Panc1 (cell line): ENCODE measurements at regions of chr1 and their contacts with region 1.

Region 1: DNA sequence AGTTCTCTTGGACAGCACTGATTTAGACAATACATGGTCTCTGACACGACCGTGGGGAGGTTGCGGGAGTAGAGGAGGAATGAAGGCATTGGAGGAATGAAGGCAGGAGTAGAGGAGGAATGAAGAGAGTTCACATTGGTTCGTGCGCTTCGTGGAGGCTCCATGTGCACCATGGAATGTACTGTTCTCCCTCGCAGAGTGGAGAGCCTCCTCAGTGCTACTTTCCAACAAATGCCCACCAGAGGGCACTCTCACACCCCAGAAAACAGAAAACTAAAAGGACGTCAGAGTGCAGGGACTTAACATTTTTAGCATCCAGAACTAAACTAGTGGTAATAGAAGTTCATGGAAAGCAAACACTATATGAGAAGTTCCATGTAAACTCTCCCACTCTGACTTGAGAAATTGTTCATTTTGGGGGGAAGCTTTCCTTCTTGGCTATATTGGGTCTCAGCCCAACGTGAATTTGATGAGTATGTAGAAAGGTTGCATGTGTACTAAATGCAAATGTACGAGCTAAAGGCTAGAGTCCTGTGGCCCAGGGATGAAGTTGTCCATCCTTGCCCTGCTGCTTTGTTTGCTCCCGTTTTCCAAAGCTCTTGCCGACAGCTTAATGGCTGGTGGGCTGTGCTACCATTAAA is 211.6 kb downstream of the LMX1A start:
- DNase-seq: peak; percentile 38
- ATAC-seq: peak; percentile 94
- H3K4me3 ChIP-seq: no peak overlapping the region
- H3K27ac ChIP-seq: no peak overlapping the region
- H3K4me1 ChIP-seq: no peaks in the 10 kb centered on the region
- H3K27me3 ChIP-seq: no peaks in the 10 kb centered on the region; the same call in none of the 2 replicates
- CTCF ChIP-seq: peak; percentile 87

Region 2: GRCh38 chr1:164660412-164660772 is 484.5 kb before region 1 on chr1:
- CTCF ChIA-PET with region 1: no interaction called
- POLR2A ChIA-PET with region 1: no interaction called
- in situ Hi-C with region 1: no loop called
- intact Hi-C with region 1: no loop called
- DNase-seq: no peak
- ATAC-seq: no peak
- H3K4me3 ChIP-seq: no peak overlapping the region
- H3K27ac ChIP-seq: no peak overlapping the region
- H3K4me1 ChIP-seq: no peaks in the 10 kb centered on the region
- H3K27me3 ChIP-seq: no peaks in the 10 kb centered on the region
- CTCF ChIP-seq: no peak

Region 3: GRCh38 chr1:165114022-165114888 is 30.6 kb before region 1 on chr1:
- CTCF ChIA-PET with region 1: interaction called, 17 read pairs
- POLR2A ChIA-PET with region 1: no interaction called
- in situ Hi-C with region 1: no loop called
- intact Hi-C with region 1: loop called (anchors 2 kb)
- DNase-seq: peak; percentile 61
- ATAC-seq: peak; percentile 50
- H3K4me3 ChIP-seq: no peak overlapping the region
- H3K27ac ChIP-seq: no peak overlapping the region
- H3K4me1 ChIP-seq: no peaks in the 10 kb centered on the region; the same call in 1 of the 2 replicates
- H3K27me3 ChIP-seq: no peaks in the 10 kb centered on the region; the same call in none of the 2 replicates
- CTCF ChIP-seq: peak; percentile 88